ENCODE measurements at regions of chr14 and their contacts with region 1.

Region 1: GRCh38 chr14:42163136-42163535 is 556.5 kb downstream of the LRFN5 start:
- DNase-seq: no peak
- ATAC-seq: no peak
- H3K4me3 Mint-ChIP-seq: no peak overlapping the region
- H3K27ac Mint-ChIP-seq: no peak overlapping the region
- H3K4me1 Mint-ChIP-seq: no peaks in the 10 kb centered on the region
- H3K27me3 Mint-ChIP-seq: no peaks in the 10 kb centered on the region
- CTCF ChIP-seq: no peak

Region 2: DNA sequence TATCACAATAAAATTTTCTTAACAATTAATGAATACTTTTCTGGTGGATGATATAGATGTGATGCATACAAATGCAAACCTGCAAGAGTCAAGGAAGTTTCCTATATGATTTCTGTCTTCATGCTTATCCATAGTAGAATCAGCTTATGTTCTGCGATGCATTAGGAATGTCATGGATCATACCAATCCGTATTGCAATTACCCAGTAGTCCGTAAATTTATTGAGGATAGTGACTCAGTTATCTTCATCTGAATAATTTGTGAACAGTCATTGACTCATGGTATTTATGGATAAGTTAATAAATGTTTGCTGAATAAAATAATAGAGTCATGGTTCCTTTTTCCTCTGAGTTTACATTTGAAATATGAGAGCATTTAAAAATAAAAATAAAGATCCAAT is 73.0 kb before region 1 on chr14:
- CTCF ChIA-PET with region 1: no interaction called
- POLR2A ChIA-PET with region 1: interaction called, 11 read pairs
- DNase-seq: no peak
- ATAC-seq: no peak
- H3K4me3 Mint-ChIP-seq: no peak overlapping the region
- H3K27ac Mint-ChIP-seq: no peak overlapping the region
- H3K4me1 Mint-ChIP-seq: no peaks in the 10 kb centered on the region
- H3K27me3 Mint-ChIP-seq: no peaks in the 10 kb centered on the region
- CTCF ChIP-seq: no peak

Region 3: GRCh38 chr14:42174357-42174756 is 11.2 kb after region 1 on chr14:
- CTCF ChIA-PET with region 1: no interaction called
- POLR2A ChIA-PET with region 1: no interaction called
- DNase-seq: no peak
- ATAC-seq: no peak
- H3K4me3 Mint-ChIP-seq: no peak overlapping the region
- H3K27ac Mint-ChIP-seq: no peak overlapping the region
- H3K4me1 Mint-ChIP-seq: peaks cover 4% of the 10 kb centered on the region; the same call in 1 of the 2 replicates
- H3K27me3 Mint-ChIP-seq: no peaks in the 10 kb centered on the region
- CTCF ChIP-seq: no peak